Calu3 (cell line): ENCODE measurements at regions of chr11 and their contacts with region 1.

Region 1: DNA sequence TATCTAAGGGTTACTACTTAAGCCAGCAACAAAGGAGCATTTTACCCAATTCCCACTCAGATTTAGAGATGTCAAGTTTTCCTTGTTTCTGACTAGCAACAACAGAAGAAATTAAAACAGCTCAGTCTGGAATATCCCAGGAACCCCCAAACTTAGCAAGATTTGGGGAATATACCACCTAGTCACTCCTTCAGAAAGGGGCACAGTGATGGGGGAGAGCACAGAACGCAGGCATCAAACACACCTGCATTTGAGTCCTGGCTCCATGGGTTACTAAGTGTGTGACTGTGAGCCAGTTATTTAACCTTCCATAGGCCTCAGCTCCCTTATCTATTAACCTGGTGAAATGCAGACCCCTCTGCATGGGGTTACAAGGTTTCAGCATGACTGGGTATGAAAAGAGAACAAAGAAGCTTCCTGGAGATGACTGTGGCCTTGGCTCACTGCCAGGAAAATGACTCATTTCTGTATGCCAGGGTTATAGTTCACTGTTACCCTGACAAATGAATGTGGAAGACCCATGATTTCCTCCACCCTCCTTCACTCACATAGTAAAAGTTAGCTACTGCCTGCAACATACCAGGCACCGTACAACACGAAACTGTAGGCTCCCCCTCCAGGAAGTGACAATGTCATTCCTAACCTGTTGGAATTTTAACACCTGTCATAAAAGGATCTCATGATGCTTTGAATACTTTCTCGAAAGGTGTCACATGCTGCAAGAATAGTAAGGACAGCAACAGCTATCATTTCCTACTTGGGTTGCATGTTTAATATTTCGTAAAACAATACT is 79.6 kb downstream of the ME3 start:
- DNase-seq: peak; percentile 85
- H3K4me3 Mint-ChIP-seq: peak overlapping the region; percentile 37
- H3K27ac Mint-ChIP-seq: peak overlapping the region; percentile 91
- H3K4me1 Mint-ChIP-seq: peaks cover 38% of the 10 kb centered on the region
- H3K27me3 Mint-ChIP-seq: no peaks in the 10 kb centered on the region
- CTCF ChIP-seq: no peak

Region 2: DNA sequence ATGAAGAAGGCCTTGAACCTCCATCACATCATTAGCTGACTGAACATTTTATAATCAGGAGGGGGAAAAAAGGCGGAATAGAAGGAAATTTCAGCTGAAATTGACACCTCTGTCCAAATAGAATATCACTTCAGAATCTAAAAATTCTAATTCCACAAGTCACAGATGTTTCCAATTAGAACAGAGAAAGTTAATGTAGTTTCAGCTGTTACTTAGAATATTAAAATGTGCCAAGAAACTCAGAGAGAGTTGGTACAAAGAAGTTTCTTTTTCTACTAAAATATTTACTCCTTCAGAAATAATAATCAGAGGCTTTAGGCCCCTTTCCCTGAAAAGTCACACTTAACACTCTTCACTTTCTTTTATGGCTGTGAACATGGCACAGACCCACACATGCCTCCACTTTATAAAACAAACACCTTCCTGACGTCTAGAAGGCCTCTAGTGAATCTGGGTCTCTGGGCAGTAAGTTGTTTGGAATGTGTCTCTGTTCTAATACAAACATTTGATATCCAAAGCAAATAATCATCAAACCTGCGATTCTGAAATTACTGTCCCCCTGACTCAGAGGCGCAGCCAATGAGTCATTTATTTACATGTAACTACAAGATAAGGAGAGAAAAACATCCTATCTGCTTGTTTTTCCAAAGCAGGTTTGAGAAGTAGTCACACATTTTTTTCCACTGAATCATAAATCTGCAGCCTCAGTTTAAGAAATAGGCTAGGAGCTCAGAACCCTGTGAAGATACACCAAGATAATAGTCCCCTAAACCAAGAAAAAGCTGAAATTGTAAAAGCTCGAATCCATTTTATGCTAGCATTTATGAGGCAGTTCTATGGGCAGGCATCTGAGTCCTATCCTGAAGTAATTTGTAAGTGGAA is 68.9 kb before region 1 on chr11:
- CTCF ChIA-PET with region 1: interaction called, 4 read pairs
- intact Hi-C with region 1: loop called (anchors 10 kb)
- DNase-seq: peak; percentile 29
- H3K4me3 Mint-ChIP-seq: peak overlapping the region; percentile 44
- H3K27ac Mint-ChIP-seq: peak overlapping the region; percentile 83
- H3K4me1 Mint-ChIP-seq: peaks cover 25% of the 10 kb centered on the region
- H3K27me3 Mint-ChIP-seq: no peaks in the 10 kb centered on the region
- CTCF ChIP-seq: no peak

Region 3: DNA sequence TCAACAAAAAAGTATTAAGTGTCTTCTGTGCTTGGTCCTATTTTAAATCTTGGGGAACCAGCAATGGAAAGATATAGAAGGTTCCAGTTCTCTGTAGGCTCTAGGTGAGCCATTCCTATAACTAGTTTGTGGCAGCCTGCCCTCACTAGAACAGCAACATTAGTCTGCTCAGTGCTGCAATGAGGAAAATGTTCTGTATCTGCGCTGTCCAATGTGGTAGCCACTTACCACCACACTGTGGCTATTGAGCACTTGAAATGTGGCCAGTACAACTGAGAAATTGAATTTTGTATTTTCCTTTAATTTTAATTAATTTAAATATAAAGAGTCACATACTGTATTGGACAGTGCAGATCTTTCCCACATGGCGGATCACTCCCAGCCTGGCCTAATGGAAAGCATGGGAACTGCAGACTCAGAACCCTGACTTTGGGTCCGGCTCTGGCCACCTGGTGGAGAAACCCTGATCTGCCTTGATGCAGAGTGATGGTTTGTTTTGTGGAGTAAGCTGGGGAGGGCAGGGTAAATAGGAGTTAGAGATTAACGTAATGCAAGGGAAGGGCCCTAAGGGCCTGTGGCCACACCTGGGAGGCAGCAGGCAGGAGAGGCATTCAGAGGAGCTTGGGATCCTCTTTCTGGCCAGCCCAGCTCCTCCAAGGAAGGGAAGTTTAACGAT is 21.4 kb before region 1 on chr11:
- CTCF ChIA-PET with region 1: no interaction called
- intact Hi-C with region 1: loop called (anchors 1 kb)
- DNase-seq: peak; percentile 22
- H3K4me3 Mint-ChIP-seq: peak overlapping the region; percentile 8
- H3K27ac Mint-ChIP-seq: no peak overlapping the region
- H3K4me1 Mint-ChIP-seq: peaks cover 63% of the 10 kb centered on the region
- H3K27me3 Mint-ChIP-seq: no peaks in the 10 kb centered on the region
- CTCF ChIP-seq: peak; percentile 59

Region 4: DNA sequence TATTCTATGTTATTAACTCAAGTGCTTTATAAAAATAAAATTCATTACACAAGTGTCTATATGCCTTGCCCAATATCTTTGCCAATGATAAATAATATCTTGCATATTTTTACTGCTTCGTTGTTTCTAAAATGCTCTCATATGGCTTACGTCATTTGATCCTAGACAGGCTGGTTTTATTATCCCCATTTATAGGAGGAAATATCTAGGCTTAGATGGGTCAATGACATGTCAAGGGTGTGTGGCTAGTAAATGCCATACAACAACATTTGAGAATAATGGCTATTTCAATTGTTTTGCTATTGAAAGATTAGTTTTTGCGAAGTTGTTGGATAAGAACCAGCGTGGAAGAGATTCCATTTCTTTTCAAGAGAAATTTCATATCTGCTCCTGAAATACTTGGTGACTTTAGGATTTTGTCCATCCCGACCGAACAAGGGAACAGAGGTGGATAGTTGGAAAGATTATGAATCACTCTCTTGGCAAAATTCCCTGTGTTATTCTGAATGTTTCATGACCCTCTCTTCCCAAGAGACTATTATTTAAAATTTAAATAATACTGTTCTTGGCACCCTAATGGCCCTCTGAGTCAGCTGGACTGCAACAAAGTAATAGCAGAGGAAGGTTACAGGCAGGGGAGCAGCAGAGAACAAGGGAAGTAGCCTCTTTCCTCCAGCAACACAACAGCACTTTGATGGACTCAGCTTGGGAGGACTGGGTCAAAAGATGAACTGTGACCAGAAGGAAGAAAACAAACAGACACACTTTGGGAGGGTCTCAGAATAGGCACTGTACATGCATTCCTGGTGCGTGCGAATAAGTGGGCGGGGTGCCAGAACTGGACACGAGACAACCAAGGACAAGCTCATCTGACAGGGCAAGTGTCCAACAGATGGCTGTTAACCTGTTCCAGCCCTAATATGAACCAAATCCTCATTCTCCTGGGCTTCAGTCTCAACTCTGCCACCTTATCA is 14.9 kb before region 1 on chr11:
- CTCF ChIA-PET with region 1: no interaction called
- intact Hi-C with region 1: loop called (anchors 2 kb)
- DNase-seq: peak; percentile 41
- H3K4me3 Mint-ChIP-seq: no peak overlapping the region
- H3K27ac Mint-ChIP-seq: no peak overlapping the region
- H3K4me1 Mint-ChIP-seq: peaks cover 35% of the 10 kb centered on the region
- H3K27me3 Mint-ChIP-seq: no peaks in the 10 kb centered on the region
- CTCF ChIP-seq: no peak